ENCODE measurements at regions of chr17 and their contacts with region 1.

Region 1: DNA sequence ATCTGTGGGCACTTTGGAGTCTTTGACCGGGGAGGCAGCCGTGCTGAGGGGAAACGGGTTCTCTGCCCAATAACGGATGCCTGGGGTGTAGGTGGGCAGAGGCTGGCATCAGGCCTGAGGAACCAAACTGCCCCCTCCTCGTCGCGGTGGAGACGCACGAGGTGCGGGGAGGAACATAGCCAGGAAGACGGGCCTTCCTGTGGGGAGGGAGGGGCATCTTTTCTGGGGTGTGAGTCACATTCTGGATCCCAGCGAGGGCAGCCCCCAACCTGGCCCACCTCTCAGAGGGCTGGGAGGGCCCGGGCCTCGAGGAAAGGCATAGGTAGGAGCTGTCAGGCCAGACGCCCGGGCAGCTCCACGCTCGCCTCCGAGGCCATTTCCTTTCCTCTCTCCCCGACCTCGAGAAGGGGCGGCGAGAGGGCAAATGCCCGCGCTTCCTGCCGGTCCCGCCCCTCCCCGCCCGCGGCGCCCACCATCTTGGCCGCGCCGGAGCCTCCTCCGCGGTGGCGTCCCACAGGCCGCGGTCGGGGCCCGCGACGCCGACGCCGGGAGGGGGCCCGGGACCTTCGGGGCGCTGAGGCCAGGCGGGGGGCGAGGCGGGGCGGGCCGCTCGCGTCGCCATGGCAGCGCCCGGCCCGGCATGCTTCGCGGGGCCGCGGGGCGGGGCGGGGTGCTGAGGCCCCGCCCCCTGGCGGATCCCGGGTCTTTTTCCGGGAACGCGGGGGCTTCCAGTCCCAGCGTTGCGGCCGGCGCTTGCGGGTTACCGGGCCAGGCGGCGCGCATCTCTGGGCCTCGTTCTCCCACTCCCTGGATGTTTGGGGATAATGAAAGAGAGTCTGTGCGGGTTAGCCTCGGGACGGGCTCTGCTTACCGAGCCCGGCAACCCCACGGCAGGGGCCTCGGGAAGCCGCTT is 13.2 kb downstream of the RAI1 start:
- DNase-seq: peak; percentile 25 to 87 (median 76)
- ATAC-seq: peak; percentile 72
- H3K4me3 ChIP-seq: peak overlapping the region; percentile 83 to 91
- H3K4me3 Mint-ChIP-seq: peak overlapping the region; percentile 86
- H3K27ac ChIP-seq: peak overlapping the region; percentile 88 to 97
- H3K27ac Mint-ChIP-seq: peak overlapping the region; percentile 99
- H3K4me1 ChIP-seq: peaks cover 52% of the 10 kb centered on the region
- H3K4me1 Mint-ChIP-seq: peaks cover 68% of the 10 kb centered on the region
- H3K27me3 ChIP-seq: no peaks in the 10 kb centered on the region
- H3K27me3 Mint-ChIP-seq: no peaks in the 10 kb centered on the region
- CTCF ChIP-seq: no peak

Region 2: DNA sequence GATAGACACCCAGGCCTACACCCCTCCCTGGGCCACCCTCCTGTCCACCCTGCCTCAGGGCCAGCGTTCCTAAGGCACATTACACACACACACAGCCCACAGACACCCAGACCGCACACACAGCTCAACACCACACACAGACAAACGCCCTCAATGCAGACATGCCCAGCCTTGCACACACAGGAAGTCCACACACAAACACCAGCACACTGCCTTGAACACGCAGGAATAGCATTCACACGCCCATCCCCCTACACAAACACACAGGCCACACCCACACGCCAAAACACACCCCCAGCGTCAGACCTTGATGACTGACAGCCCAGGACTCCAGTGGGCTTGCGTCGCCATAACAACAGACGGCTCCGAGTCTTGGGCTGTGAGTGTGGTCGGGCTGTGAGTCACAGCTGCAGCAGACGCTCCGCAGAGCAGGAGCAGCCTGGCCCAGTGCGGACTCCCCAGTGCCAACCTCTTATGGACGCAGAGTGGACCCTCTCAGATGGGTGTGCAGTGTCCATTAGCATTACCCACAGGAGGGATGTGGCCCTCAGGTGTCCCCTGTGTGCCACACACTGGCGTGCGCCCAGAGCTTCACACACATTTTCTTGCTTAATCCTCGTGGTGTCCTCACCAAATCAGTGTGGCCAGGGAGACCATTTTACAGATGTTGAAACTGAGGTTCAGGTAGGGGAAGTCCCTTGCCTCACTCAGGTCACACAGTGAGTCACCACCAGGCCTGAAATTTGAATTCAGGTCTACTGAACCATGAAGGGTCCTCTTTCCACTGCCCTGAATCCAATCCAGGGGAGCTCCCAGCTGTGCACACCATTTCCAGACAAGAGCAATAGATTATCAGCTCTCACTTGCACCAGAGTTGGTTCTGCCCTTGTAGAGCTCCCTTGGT is 31.0 kb before region 1 on chr17:
- CTCF ChIA-PET with region 1: interaction called, 4 read pairs
- POLR2A ChIA-PET with region 1: no interaction called
- intact Hi-C with region 1: loop called in 1 of 2 experiments (anchors 1 kb)
- DNase-seq: peak; percentile 65 to 96 (median 84)
- ATAC-seq: peak; percentile 89
- H3K4me3 ChIP-seq: peak overlapping the region in 1 of 2 experiments; percentile 23
- H3K4me3 Mint-ChIP-seq: peak overlapping the region; percentile 2
- H3K27ac ChIP-seq: peak overlapping the region; percentile 42 to 72
- H3K27ac Mint-ChIP-seq: peak overlapping the region; percentile 61
- H3K4me1 ChIP-seq: peaks cover 15% of the 10 kb centered on the region
- H3K4me1 Mint-ChIP-seq: peaks cover 18% of the 10 kb centered on the region
- H3K27me3 ChIP-seq: no peaks in the 10 kb centered on the region
- H3K27me3 Mint-ChIP-seq: no peaks in the 10 kb centered on the region
- CTCF ChIP-seq: no peak

Region 3: GRCh38 chr17:17783116-17783824 is 88.8 kb after region 1 on chr17:
- CTCF ChIA-PET with region 1: no interaction called
- POLR2A ChIA-PET with region 1: no interaction called
- intact Hi-C with region 1: loop called in 1 of 2 experiments (anchors 2 kb)
- DNase-seq: peak; percentile 24 to 79 (median 65)
- ATAC-seq: peak; percentile 58
- H3K4me3 ChIP-seq: peak overlapping the region; percentile 50 to 54
- H3K4me3 Mint-ChIP-seq: peak overlapping the region; percentile 85
- H3K27ac ChIP-seq: peak overlapping the region in 1 of 2 experiments; percentile 36
- H3K27ac Mint-ChIP-seq: peak overlapping the region; percentile 41
- H3K4me1 ChIP-seq: peaks cover 30% of the 10 kb centered on the region
- H3K4me1 Mint-ChIP-seq: peaks cover 30% of the 10 kb centered on the region
- H3K27me3 ChIP-seq: peaks cover 0 to 4% of the 10 kb centered on the region in 2 experiments
- H3K27me3 Mint-ChIP-seq: no peaks in the 10 kb centered on the region
- CTCF ChIP-seq: peak; percentile 26

Region 4: DNA sequence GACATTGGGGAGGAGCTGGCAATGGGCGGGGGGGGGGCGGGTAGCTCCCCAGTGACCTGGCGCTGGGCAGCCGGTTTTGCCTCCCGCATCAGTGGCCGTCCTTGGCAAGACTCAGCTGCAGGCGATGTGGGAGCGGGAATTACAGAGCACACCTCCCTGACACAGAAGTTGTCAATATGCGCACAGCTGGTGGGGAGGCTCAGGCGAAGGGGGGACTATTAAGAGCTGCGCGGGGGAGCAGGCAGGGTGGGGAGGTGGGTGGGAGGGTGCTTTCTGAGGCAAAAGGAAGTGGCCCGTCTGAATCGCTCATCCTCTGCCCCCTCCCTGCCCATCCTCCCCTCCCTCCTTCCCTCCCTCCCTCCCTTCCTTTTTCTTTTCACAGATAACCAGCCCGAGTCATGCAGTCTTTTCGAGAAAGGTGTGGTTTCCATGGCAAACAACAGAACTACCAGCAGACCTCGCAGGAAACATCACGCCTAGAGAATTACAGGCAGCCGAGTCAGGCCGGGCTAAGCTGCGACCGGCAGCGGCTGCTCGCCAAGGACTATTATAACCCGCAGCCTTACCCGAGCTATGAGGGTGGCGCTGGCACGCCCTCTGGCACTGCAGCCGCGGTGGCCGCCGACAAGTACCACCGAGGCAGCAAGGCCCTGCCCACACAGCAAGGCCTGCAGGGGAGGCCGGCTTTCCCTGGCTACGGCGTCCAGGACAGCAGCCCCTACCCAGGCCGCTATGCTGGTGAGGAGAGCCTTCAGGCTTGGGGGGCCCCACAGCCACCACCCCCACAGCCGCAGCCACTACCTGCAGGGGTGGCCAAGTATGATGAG is 98.3 kb after region 1 on chr17:
- CTCF ChIA-PET with region 1: no interaction called
- POLR2A ChIA-PET with region 1: no interaction called
- intact Hi-C with region 1: loop called in 1 of 2 experiments (anchors 2 kb)
- DNase-seq: peak; percentile 39 to 94 (median 68)
- ATAC-seq: peak; percentile 91
- H3K4me3 ChIP-seq: peak overlapping the region; percentile 16 to 24
- H3K4me3 Mint-ChIP-seq: peak overlapping the region; percentile 66
- H3K27ac ChIP-seq: peak overlapping the region; percentile 65 to 76
- H3K27ac Mint-ChIP-seq: peak overlapping the region; percentile 82
- H3K4me1 ChIP-seq: peaks cover 23% of the 10 kb centered on the region
- H3K4me1 Mint-ChIP-seq: peaks cover 32% of the 10 kb centered on the region
- H3K27me3 ChIP-seq: no peaks in the 10 kb centered on the region
- H3K27me3 Mint-ChIP-seq: no peaks in the 10 kb centered on the region
- CTCF ChIP-seq: no peak